ENCODE measurements at regions of chr2 and their contacts with region 1.

Region 1: GRCh38 chr2:99337113-99338028 is at the start of gene EIF5B:
- DNase-seq: peak; percentile 95
- ATAC-seq: peak; percentile 71
- H3K4me3 Mint-ChIP-seq: no peak within 1 kb of the TSS
- H3K27ac Mint-ChIP-seq: no peak within 1 kb of the TSS
- H3K4me1 Mint-ChIP-seq: peaks cover 47% of the 10 kb centered on the region
- H3K27me3 Mint-ChIP-seq: no peaks in the 10 kb centered on the region
- total RNA-seq, gene EIF5B: 79.0 to 95.4 TPM

Region 2: GRCh38 chr2:97645695-97646629 is 1691.4 kb before region 1 on chr2 and contains the start of gene COX5B:
- CTCF ChIA-PET with region 1: no interaction called
- POLR2A ChIA-PET with region 1: no interaction called
- intact Hi-C with region 1: loop called in 1 of 2 experiments (anchors 5 kb)
- DNase-seq: peak; percentile 99
- ATAC-seq: peak; percentile 96
- H3K4me3 Mint-ChIP-seq: peak within 1 kb of the TSS; percentile 87
- H3K27ac Mint-ChIP-seq: peak within 1 kb of the TSS; percentile 98
- H3K4me1 Mint-ChIP-seq: peaks cover 14% of the 10 kb centered on the region
- H3K27me3 Mint-ChIP-seq: no peaks in the 10 kb centered on the region
- total RNA-seq, gene COX5B: 189 to 220 TPM

Region 3: GRCh38 chr2:98465456-98466226 is 871.7 kb before region 1 on chr2:
- CTCF ChIA-PET with region 1: no interaction called
- POLR2A ChIA-PET with region 1: no interaction called
- intact Hi-C with region 1: loop called in 1 of 2 experiments (anchors 10 kb)
- DNase-seq: peak; percentile 78
- ATAC-seq: peak; percentile 16
- H3K4me3 Mint-ChIP-seq: peak overlapping the region; percentile 69
- H3K27ac Mint-ChIP-seq: peak overlapping the region; percentile 96
- H3K4me1 Mint-ChIP-seq: peaks cover 90% of the 10 kb centered on the region
- H3K27me3 Mint-ChIP-seq: no peaks in the 10 kb centered on the region

Region 4: GRCh38 chr2:99141110-99142108 is 196.0 kb before region 1 on chr2 and contains the start of gene C2orf15:
- CTCF ChIA-PET with region 1: interaction called, 4 read pairs
- POLR2A ChIA-PET with region 1: interaction called, 4 read pairs
- intact Hi-C with region 1: loop called (anchors 1 kb)
- DNase-seq: peak; percentile 98
- ATAC-seq: peak; percentile 95
- H3K4me3 Mint-ChIP-seq: peak within 1 kb of the TSS; percentile 94
- H3K27ac Mint-ChIP-seq: peak within 1 kb of the TSS; percentile 86
- H3K4me1 Mint-ChIP-seq: peaks cover 16% of the 10 kb centered on the region
- H3K27me3 Mint-ChIP-seq: no peaks in the 10 kb centered on the region
- total RNA-seq, gene C2orf15: 0.87 to 1.1 TPM

Region 5: DNA sequence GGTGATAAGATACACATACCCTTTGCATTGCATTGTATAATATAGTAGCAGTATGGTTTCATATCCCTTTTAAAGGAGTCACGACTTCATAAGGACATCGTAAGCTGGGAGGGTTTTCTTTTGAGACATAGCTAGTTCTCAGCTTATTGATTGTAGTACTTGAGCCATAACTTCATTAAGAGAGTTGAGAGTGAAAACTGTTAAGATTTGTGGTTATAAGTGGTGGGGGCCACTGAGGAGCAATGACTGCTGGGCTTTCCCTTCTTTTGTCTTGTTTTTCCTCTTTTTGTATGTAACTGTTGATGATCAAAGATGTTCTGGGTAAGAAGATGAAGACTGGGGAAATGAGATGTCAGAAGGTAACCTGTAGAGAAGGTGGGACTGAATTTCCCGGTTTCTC is 10.8 kb after region 1 on chr2:
- CTCF ChIA-PET with region 1: interaction called, 11 read pairs
- POLR2A ChIA-PET with region 1: interaction called, 6 read pairs
- intact Hi-C with region 1: loop called in 1 of 2 experiments (anchors 1 kb)
- DNase-seq: peak; percentile 26
- ATAC-seq: peak; percentile 92
- H3K4me3 Mint-ChIP-seq: no peak overlapping the region
- H3K27ac Mint-ChIP-seq: peak overlapping the region; percentile 16
- H3K4me1 Mint-ChIP-seq: peaks cover 60% of the 10 kb centered on the region
- H3K27me3 Mint-ChIP-seq: no peaks in the 10 kb centered on the region

Region 6: DNA sequence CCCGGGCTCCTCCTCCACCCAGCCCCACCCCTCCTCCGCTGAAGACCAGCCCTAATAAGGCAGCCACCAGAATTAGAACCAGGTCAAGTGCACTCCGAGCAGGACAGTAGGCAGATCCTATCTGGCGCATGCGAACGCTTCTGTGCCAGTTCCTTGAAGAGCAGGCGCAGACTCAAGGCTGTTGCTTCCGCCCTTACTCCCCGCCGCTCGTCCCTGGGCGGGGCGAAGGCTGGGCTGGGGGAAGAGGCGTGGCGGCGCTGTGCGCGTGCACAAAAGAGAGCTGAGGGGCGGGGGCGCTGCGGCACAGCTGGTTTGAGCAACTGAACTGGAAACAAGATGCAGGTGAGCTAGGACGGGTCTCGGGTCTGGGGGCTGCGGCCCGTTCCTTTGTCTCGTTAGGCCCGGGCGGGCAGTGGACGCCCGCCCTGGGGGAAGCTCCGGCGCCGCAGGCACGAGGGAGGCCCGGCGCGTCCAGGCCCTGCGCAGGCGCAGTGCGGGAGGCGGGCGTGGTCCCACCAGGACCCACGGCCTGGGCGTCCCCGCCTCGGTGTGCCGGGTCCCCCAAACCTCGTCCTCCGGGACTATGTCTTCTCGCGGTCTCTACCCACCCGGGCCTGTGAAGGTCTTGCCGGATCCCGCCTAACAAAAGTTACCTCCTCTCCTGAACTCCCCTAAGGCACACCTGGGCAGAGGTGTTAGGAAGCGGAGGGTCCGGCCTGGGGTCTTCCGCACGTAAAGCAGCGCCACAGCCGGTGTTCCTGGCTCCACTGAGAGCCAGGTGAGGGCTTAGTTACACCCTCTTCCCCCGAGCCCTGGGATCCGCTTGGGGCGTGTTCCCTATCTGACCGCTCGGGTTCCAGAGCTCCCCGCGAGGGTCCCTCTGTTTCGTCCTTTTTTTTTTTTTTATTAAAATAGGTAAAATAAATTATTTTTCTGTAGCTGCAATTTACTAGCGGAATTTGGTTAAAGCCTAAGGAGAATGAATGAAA is 1225.7 kb after region 1 on chr2 and contains the start of gene PDCL3:
- CTCF ChIA-PET with region 1: no interaction called
- POLR2A ChIA-PET with region 1: no interaction called
- intact Hi-C with region 1: loop called (anchors 1 to 2 kb)
- DNase-seq: peak; percentile 96
- ATAC-seq: peak; percentile 96
- H3K4me3 Mint-ChIP-seq: peak within 1 kb of the TSS; percentile 85
- H3K27ac Mint-ChIP-seq: peak within 1 kb of the TSS; percentile 97
- H3K4me1 Mint-ChIP-seq: peaks cover 26% of the 10 kb centered on the region
- H3K27me3 Mint-ChIP-seq: no peaks in the 10 kb centered on the region
- total RNA-seq, gene PDCL3: 39.3 to 41.9 TPM

Measured in activated CD4-positive, alpha-beta T cell treated with anti-CD3 and anti-CD28 coated beads for 36 hours (primary cell).